ENCODE measurements at regions of chr9 and their contacts with region 1.

Region 1: DNA sequence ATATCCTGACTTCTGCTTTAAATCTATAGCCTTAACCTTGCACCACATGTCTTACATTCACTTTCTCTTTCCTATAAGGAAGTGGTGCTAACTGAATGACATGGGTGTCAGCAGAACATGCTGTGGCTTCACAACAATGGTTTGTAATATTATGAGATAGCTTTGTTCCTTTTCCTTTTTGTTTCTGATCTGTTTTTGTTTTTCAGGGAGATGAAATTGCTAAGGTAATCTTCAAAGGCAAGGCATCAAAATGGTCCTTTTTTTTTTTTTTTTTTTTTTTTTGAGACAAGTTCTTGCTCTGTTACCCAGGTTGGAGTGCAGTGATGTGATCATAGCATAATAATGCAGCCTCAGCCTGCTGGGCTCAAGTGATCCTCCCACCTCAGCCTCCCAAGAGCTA is 53.6 kb upstream of the RANBP6 start:
- DNase-seq: peak in 18 of 35 experiments; percentile 7 to 73 (median 20)
- ATAC-seq: peak; percentile 88 to 100 (median 94)
- H3K4me3 ChIP-seq: no peak overlapping the region
- H3K4me3 Mint-ChIP-seq: peak overlapping the region; percentile 58 to 67 (median 62)
- H3K27ac ChIP-seq: peak overlapping the region; percentile 67
- H3K27ac Mint-ChIP-seq: peak overlapping the region; percentile 93 to 94
- H3K4me1 ChIP-seq: peaks cover 2 to 13% of the 10 kb centered on the region in 2 experiments
- H3K4me1 Mint-ChIP-seq: peaks cover 21 to 24% (median 23%) of the 10 kb centered on the region in 3 donors
- H3K27me3 ChIP-seq: peaks cover 0 to 6% of the 10 kb centered on the region in 2 experiments
- H3K27me3 Mint-ChIP-seq: no peaks in the 10 kb centered on the region

Region 2: GRCh38 chr9:5756633-5757032 is 312.4 kb before region 1 on chr9:
- CTCF ChIA-PET with region 1: no interaction called
- POLR2A ChIA-PET with region 1: interaction called in 1 of 2 experiments, 10 read pairs
- DNase-seq: no peak
- ATAC-seq: no peak
- H3K4me3 ChIP-seq: no peak overlapping the region
- H3K4me3 Mint-ChIP-seq: no peak overlapping the region
- H3K27ac ChIP-seq: no peak overlapping the region
- H3K27ac Mint-ChIP-seq: no peak overlapping the region
- H3K4me1 ChIP-seq: no peaks in the 10 kb centered on the region
- H3K4me1 Mint-ChIP-seq: peaks cover 0 to 9% (median 9%) of the 10 kb centered on the region in 3 donors
- H3K27me3 ChIP-seq: no peaks in the 10 kb centered on the region
- H3K27me3 Mint-ChIP-seq: no peaks in the 10 kb centered on the region

Region 3: GRCh38 chr9:5947912-5948311 is 121.1 kb before region 1 on chr9:
- CTCF ChIA-PET with region 1: interaction called in 1 of 2 experiments, 13 read pairs
- POLR2A ChIA-PET with region 1: no interaction called
- DNase-seq: peak in 3 of 35 experiments; percentile 1 to 10 (median 1)
- ATAC-seq: no peak
- H3K4me3 ChIP-seq: no peak overlapping the region
- H3K4me3 Mint-ChIP-seq: no peak overlapping the region
- H3K27ac ChIP-seq: no peak overlapping the region
- H3K27ac Mint-ChIP-seq: peak overlapping the region in 1 of 2 donors; percentile 22
- H3K4me1 ChIP-seq: peaks cover 3 to 8% of the 10 kb centered on the region in 2 experiments
- H3K4me1 Mint-ChIP-seq: peaks cover 21 to 24% (median 24%) of the 10 kb centered on the region in 3 donors
- H3K27me3 ChIP-seq: no peaks in the 10 kb centered on the region
- H3K27me3 Mint-ChIP-seq: no peaks in the 10 kb centered on the region

Region 4: GRCh38 chr9:6015278-6016157 is 53.5 kb before region 1 on chr9 and contains the start of gene RANBP6:
- CTCF ChIA-PET with region 1: interaction called in 1 of 2 experiments, 7 read pairs
- POLR2A ChIA-PET with region 1: interaction called in 1 of 2 experiments, 23 read pairs
- DNase-seq: peak; percentile 76 to 94 (median 91)
- ATAC-seq: peak; percentile 99
- H3K4me3 ChIP-seq: peak within 1 kb of the TSS; percentile 88 to 97
- H3K4me3 Mint-ChIP-seq: peak within 1 kb of the TSS; percentile 89 to 98 (median 95)
- H3K27ac ChIP-seq: peak within 1 kb of the TSS; percentile 84
- H3K27ac Mint-ChIP-seq: peak within 1 kb of the TSS; percentile 90 to 99
- H3K4me1 ChIP-seq: peaks cover 10 to 16% of the 10 kb centered on the region in 2 experiments
- H3K4me1 Mint-ChIP-seq: peaks cover 32 to 45% (median 43%) of the 10 kb centered on the region in 3 donors
- H3K27me3 ChIP-seq: no peaks in the 10 kb centered on the region
- H3K27me3 Mint-ChIP-seq: no peaks in the 10 kb centered on the region
- total RNA-seq, gene RANBP6: 26.2 to 34.6 (median 29.3) TPM

Region 5: DNA sequence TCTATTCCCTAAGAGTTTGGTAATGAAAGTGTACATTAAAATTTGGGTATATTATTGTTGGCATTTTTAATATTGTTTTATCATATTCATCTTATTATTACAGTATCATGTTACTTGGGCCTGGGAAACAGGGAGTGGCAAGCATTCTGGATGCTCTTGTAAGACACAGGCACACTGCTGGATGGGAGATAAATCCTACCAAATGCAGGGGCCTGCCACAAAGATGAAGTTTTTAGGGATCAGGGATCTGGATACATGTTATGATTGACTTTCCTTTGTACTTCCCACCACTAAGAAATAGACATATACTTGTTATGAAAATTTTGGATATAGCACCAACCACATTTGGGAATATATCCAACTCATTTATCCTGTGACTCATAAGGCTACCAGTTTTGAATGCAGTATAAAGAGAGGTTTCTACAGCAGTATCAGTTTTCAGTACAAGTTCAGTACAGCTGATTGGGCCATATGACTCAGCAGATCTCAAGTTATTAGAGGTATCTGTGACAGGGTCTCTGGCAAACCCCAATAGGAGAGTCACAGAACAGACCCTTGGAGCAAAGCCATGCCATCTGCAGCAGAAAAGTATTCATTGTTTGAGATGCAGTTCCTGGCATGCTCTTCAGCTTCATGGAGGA is 1370.5 kb after region 1 on chr9:
- CTCF ChIA-PET with region 1: no interaction called
- POLR2A ChIA-PET with region 1: interaction called in 1 of 2 experiments, 11 read pairs
- DNase-seq: no peak
- ATAC-seq: no peak
- H3K4me3 ChIP-seq: no peak overlapping the region
- H3K4me3 Mint-ChIP-seq: no peak overlapping the region
- H3K27ac ChIP-seq: no peak overlapping the region
- H3K27ac Mint-ChIP-seq: no peak overlapping the region
- H3K4me1 ChIP-seq: no peaks in the 10 kb centered on the region
- H3K4me1 Mint-ChIP-seq: no peaks in the 10 kb centered on the region
- H3K27me3 ChIP-seq: no peaks in the 10 kb centered on the region
- H3K27me3 Mint-ChIP-seq: peaks cover 0 to 3% of the 10 kb centered on the region in 2 donors

Measured in T-cell (primary cell).